CD4-positive, alpha-beta memory T cell (primary cell): ENCODE measurements at regions of chr15 and their contacts with region 1.

Region 1: GRCh38 chr15:90233376-90234095 is at the start of gene CIB1:
- DNase-seq: peak; percentile 96 to 98 (median 96)
- H3K4me3 ChIP-seq: peak within 1 kb of the TSS; percentile 81 to 100
- H3K4me3 Mint-ChIP-seq: peak within 1 kb of the TSS; percentile 89 to 96 (median 94)
- H3K27ac ChIP-seq: peak within 1 kb of the TSS; percentile 96
- H3K27ac Mint-ChIP-seq: peak within 1 kb of the TSS; percentile 95 to 100 (median 100)
- H3K4me1 ChIP-seq: peaks cover 53% of the 10 kb centered on the region
- H3K4me1 Mint-ChIP-seq: peaks cover 36 to 61% (median 48%) of the 10 kb centered on the region in 4 donors
- H3K27me3 ChIP-seq: no peaks in the 10 kb centered on the region
- H3K27me3 Mint-ChIP-seq: no peaks in the 10 kb centered on the region
- total RNA-seq, gene CIB1: 95.2 to 98.2 TPM

Region 2: GRCh38 chr15:90101969-90102890 is 131.3 kb before region 1 on chr15 and contains the start of gene IDH2:
- CTCF ChIA-PET with region 1: no interaction called
- POLR2A ChIA-PET with region 1: interaction called, 27 read pairs
- intact Hi-C with region 1: loop called (anchors 5 kb)
- DNase-seq: peak; percentile 65 to 82 (median 75)
- H3K4me3 ChIP-seq: peak within 1 kb of the TSS; percentile 70 to 79
- H3K4me3 Mint-ChIP-seq: peak within 1 kb of the TSS; percentile 85 to 97 (median 90)
- H3K27ac ChIP-seq: peak within 1 kb of the TSS; percentile 65
- H3K27ac Mint-ChIP-seq: peak within 1 kb of the TSS; percentile 86 to 100 (median 98)
- H3K4me1 ChIP-seq: peaks cover 47% of the 10 kb centered on the region
- H3K4me1 Mint-ChIP-seq: peaks cover 35 to 55% (median 49%) of the 10 kb centered on the region in 4 donors
- H3K27me3 ChIP-seq: no peaks in the 10 kb centered on the region
- H3K27me3 Mint-ChIP-seq: no peaks in the 10 kb centered on the region
- total RNA-seq, gene IDH2: 41.2 to 43.6 TPM

Region 3: DNA sequence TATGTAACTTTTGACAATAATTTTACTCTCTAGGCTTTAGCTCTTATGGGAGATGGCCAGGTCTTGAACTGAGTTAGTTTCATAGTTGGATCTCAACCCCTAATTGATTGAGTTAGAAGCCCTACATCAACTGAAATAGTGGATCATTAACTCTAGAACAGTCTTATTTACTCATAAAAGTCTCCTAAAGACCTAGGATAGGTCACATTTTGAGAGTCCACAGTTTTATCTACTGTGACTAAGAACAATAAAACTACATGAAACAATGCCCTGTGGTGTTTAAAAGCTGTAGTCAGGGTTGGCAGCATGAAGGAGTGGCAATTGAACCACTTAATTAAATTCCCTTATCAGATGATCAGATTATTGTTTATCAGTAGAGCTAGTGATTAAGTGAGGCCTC is 109.0 kb before region 1 on chr15:
- CTCF ChIA-PET with region 1: no interaction called
- POLR2A ChIA-PET with region 1: no interaction called
- intact Hi-C with region 1: no loop called
- DNase-seq: no peak
- H3K4me3 ChIP-seq: no peak overlapping the region
- H3K4me3 Mint-ChIP-seq: no peak overlapping the region
- H3K27ac ChIP-seq: no peak overlapping the region
- H3K27ac Mint-ChIP-seq: no peak overlapping the region
- H3K4me1 ChIP-seq: no peaks in the 10 kb centered on the region
- H3K4me1 Mint-ChIP-seq: no peaks in the 10 kb centered on the region
- H3K27me3 ChIP-seq: no peaks in the 10 kb centered on the region
- H3K27me3 Mint-ChIP-seq: peaks cover 9 to 10% of the 10 kb centered on the region in 2 donors

Region 4: GRCh38 chr15:90201130-90201949 is 32.2 kb before region 1 on chr15 and contains the start of gene SEMA4B:
- CTCF ChIA-PET with region 1: interaction called, 4 read pairs
- POLR2A ChIA-PET with region 1: interaction called, 130 read pairs
- intact Hi-C with region 1: loop called (anchors 1 kb)
- DNase-seq: peak; percentile 70 to 78 (median 73)
- H3K4me3 ChIP-seq: peak within 1 kb of the TSS; percentile 17 to 79
- H3K4me3 Mint-ChIP-seq: peak within 1 kb of the TSS; percentile 81 to 91 (median 90)
- H3K27ac ChIP-seq: peak within 1 kb of the TSS; percentile 74
- H3K27ac Mint-ChIP-seq: peak within 1 kb of the TSS; percentile 41 to 91 (median 80)
- H3K4me1 ChIP-seq: peaks cover 24% of the 10 kb centered on the region
- H3K4me1 Mint-ChIP-seq: peaks cover 14 to 35% (median 25%) of the 10 kb centered on the region in 4 donors
- H3K27me3 ChIP-seq: no peaks in the 10 kb centered on the region
- H3K27me3 Mint-ChIP-seq: no peaks in the 10 kb centered on the region
- total RNA-seq, gene SEMA4B: 18.9 to 23.0 TPM

Region 5: DNA sequence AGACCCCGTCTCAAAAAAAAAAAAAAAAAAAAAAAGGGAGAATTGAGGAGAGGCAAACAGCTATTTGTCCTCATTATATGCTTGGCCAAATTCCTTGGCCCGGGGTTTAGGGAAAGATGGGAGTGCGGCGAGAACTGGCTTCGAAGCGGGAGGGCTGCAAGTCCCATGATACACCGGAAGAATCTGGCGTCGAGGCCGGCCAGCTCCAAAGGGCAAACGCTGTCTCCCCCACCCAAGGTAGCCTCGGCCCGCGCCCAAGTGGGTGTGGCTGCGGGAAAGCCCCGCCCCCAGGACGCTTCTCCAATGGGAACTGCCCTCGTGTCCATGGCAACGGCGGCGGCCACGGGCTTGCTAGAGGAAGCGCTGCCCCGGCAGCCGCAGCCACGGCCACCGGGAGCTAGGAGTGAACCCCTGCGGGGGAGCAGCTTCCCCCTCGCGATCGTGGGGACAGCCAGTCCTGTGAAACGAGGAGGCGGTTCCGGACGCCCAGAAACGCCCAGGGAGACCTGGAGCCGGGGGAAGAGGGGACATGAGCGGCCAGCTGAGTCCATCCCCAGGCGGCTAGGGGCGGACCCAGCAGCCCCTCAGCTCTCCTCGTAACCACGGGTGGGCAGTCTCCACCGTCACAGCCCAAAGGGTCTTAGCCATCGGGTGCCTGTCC is 15.8 kb after region 1 on chr15 and contains the start of gene TTLL13:
- CTCF ChIA-PET with region 1: interaction called, 10 read pairs
- POLR2A ChIA-PET with region 1: interaction called, 17 read pairs
- intact Hi-C with region 1: loop called (anchors 1 kb)
- DNase-seq: peak in 4 of 5 donors; percentile 44 to 69 (median 54)
- H3K4me3 ChIP-seq: peak within 1 kb of the TSS; percentile 3 to 35
- H3K4me3 Mint-ChIP-seq: peak within 1 kb of the TSS; percentile 64 to 79 (median 73)
- H3K27ac ChIP-seq: no peak within 1 kb of the TSS
- H3K27ac Mint-ChIP-seq: peak within 1 kb of the TSS; percentile 28 to 88 (median 50)
- H3K4me1 ChIP-seq: peaks cover 14% of the 10 kb centered on the region
- H3K4me1 Mint-ChIP-seq: peaks cover 6 to 18% (median 9%) of the 10 kb centered on the region in 4 donors
- H3K27me3 ChIP-seq: no peaks in the 10 kb centered on the region
- H3K27me3 Mint-ChIP-seq: no peaks in the 10 kb centered on the region
- total RNA-seq, gene TTLL13: 1.1 to 1.4 TPM

Region 6: GRCh38 chr15:90387537-90388461 is 154.3 kb after region 1 on chr15 and contains the start of gene IQGAP1:
- CTCF ChIA-PET with region 1: no interaction called
- POLR2A ChIA-PET with region 1: interaction called, 5 read pairs
- intact Hi-C with region 1: loop called (anchors 1 kb)
- DNase-seq: peak; percentile 92 to 97 (median 95)
- H3K4me3 ChIP-seq: peak within 1 kb of the TSS; percentile 70 to 85
- H3K4me3 Mint-ChIP-seq: peak within 1 kb of the TSS; percentile 89 to 96 (median 93)
- H3K27ac ChIP-seq: peak within 1 kb of the TSS; percentile 84
- H3K27ac Mint-ChIP-seq: peak within 1 kb of the TSS; percentile 93 to 98 (median 96)
- H3K4me1 ChIP-seq: peaks cover 42% of the 10 kb centered on the region
- H3K4me1 Mint-ChIP-seq: peaks cover 36 to 54% (median 48%) of the 10 kb centered on the region in 4 donors
- H3K27me3 ChIP-seq: no peaks in the 10 kb centered on the region
- H3K27me3 Mint-ChIP-seq: no peaks in the 10 kb centered on the region
- total RNA-seq, gene IQGAP1: 128 to 132 TPM